Naive thymus-derived CD4-positive, alpha-beta T cell (primary cell): ENCODE measurements at regions of chr18 and their contacts with region 1.

Region 1: GRCh38 chr18:21955757-21956652 is 213.4 kb upstream of the GATA6 start:
- DNase-seq: peak; percentile 32 to 77 (median 59)
- ATAC-seq: peak; percentile 92
- H3K4me3 ChIP-seq: no peak overlapping the region
- H3K4me3 Mint-ChIP-seq: no peak overlapping the region
- H3K27ac ChIP-seq: no peak overlapping the region
- H3K27ac Mint-ChIP-seq: no peak overlapping the region
- H3K4me1 ChIP-seq: no peaks in the 10 kb centered on the region
- H3K4me1 Mint-ChIP-seq: peaks cover 0 to 2% (median 0%) of the 10 kb centered on the region in 7 donors
- H3K27me3 ChIP-seq: no peaks in the 10 kb centered on the region
- H3K27me3 Mint-ChIP-seq: peaks cover 8 to 30% (median 11%) of the 10 kb centered on the region in 5 donors

Region 2: DNA sequence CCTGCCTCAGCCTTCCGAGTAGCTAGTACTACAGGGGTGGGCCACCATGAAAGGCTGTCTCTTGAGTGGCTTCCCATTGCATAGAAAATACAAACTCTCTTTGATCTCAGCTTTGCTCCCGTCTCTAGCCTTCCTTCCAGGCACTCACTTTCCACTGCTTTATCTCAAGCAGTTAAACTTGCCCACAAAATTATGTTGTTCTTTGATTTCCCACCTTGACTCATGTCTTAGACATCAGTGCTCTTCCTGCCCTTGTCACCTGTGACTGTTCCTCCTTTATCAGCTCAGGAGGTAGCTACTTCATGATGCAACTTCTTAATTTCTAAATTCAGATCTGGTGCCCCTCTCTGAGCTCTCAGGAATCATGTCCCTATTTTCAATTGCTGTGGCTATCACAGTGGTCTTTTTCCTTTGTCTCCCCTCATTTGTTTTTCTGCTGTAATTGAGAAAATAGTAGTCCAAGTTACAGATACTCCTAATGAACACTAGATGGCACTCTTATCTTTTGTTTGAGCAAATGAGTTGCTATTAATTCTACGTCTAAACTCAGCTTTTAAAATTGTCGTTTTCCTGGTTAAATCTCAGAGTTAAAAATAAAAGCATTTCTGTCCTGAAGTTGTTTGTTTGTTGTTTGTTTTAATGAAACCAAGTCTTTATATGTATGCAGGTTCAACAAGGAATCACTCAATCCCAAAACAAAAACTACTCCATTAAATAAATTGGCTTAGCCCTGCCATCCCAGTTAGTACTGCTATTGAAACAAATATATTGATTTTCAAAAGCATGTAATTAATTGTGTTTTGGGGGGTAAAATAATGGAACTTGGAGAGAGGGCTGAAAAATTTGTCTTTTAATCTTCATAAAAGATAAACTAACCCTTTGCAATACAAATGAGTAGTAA is 760.9 kb before region 1 on chr18:
- CTCF ChIA-PET with region 1: interaction called, 8 read pairs
- POLR2A ChIA-PET with region 1: no interaction called
- intact Hi-C with region 1: loop called in 1 of 2 experiments (anchors 1 kb)
- DNase-seq: peak in 6 of 9 donors; percentile 3 to 26 (median 18)
- ATAC-seq: peak; percentile 41
- H3K4me3 ChIP-seq: no peak overlapping the region
- H3K4me3 Mint-ChIP-seq: no peak overlapping the region
- H3K27ac ChIP-seq: no peak overlapping the region
- H3K27ac Mint-ChIP-seq: peak overlapping the region in 1 of 9 donors; percentile 0
- H3K4me1 ChIP-seq: no peaks in the 10 kb centered on the region
- H3K4me1 Mint-ChIP-seq: peaks cover 0 to 2% (median 0%) of the 10 kb centered on the region in 7 donors
- H3K27me3 ChIP-seq: no peaks in the 10 kb centered on the region
- H3K27me3 Mint-ChIP-seq: peaks cover 13 to 30% (median 20%) of the 10 kb centered on the region in 5 donors

Region 3: GRCh38 chr18:21489119-21489750 is 466.8 kb before region 1 on chr18:
- CTCF ChIA-PET with region 1: no interaction called
- POLR2A ChIA-PET with region 1: no interaction called
- intact Hi-C with region 1: loop called in 1 of 2 experiments (anchors 1 kb)
- DNase-seq: peak in 5 of 9 donors; percentile 6 to 33 (median 22)
- ATAC-seq: peak; percentile 38
- H3K4me3 ChIP-seq: no peak overlapping the region
- H3K4me3 Mint-ChIP-seq: no peak overlapping the region
- H3K27ac ChIP-seq: no peak overlapping the region
- H3K27ac Mint-ChIP-seq: no peak overlapping the region
- H3K4me1 ChIP-seq: no peaks in the 10 kb centered on the region
- H3K4me1 Mint-ChIP-seq: peaks cover 0 to 1% (median 0%) of the 10 kb centered on the region in 7 donors
- H3K27me3 ChIP-seq: no peaks in the 10 kb centered on the region
- H3K27me3 Mint-ChIP-seq: peaks cover 0 to 4% (median 0%) of the 10 kb centered on the region in 5 donors

Region 4: GRCh38 chr18:21727702-21728101 is 228.3 kb before region 1 on chr18:
- CTCF ChIA-PET with region 1: no interaction called
- POLR2A ChIA-PET with region 1: no interaction called
- intact Hi-C with region 1: loop called in 1 of 2 experiments (anchors 10 kb)
- DNase-seq: no peak
- ATAC-seq: no peak
- H3K4me3 ChIP-seq: no peak overlapping the region
- H3K4me3 Mint-ChIP-seq: no peak overlapping the region
- H3K27ac ChIP-seq: no peak overlapping the region
- H3K27ac Mint-ChIP-seq: no peak overlapping the region
- H3K4me1 ChIP-seq: no peaks in the 10 kb centered on the region
- H3K4me1 Mint-ChIP-seq: peaks cover 0 to 4% (median 0%) of the 10 kb centered on the region in 7 donors
- H3K27me3 ChIP-seq: no peaks in the 10 kb centered on the region
- H3K27me3 Mint-ChIP-seq: peaks cover 0 to 6% (median 0%) of the 10 kb centered on the region in 5 donors

Region 5: GRCh38 chr18:21820035-21820810 is 135.8 kb before region 1 on chr18:
- CTCF ChIA-PET with region 1: no interaction called
- POLR2A ChIA-PET with region 1: no interaction called
- intact Hi-C with region 1: loop called in 1 of 2 experiments (anchors 1 kb)
- DNase-seq: no peak
- ATAC-seq: no peak
- H3K4me3 ChIP-seq: no peak overlapping the region
- H3K4me3 Mint-ChIP-seq: no peak overlapping the region
- H3K27ac ChIP-seq: no peak overlapping the region
- H3K27ac Mint-ChIP-seq: no peak overlapping the region
- H3K4me1 ChIP-seq: no peaks in the 10 kb centered on the region
- H3K4me1 Mint-ChIP-seq: no peaks in the 10 kb centered on the region
- H3K27me3 ChIP-seq: no peaks in the 10 kb centered on the region
- H3K27me3 Mint-ChIP-seq: no peaks in the 10 kb centered on the region

Region 6: DNA sequence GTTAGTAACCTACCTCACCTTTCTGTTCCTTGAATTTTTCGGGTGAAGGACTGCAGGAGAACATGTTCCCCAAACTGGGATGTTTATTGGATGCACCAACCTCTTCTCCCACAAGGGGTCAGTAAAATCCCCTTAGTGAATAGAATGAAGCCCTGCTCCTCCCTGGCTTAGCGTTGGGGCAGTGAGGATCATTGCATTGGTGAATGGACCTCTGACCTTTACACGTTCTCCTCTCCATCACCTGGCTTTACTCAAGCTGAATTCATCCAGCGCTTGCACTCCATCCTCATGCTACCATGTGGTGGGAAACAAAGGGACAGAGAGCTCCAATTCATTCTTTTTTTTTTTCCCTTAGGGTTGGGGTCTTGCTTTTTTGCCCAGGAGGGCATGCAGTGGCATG is 58.2 kb before region 1 on chr18:
- CTCF ChIA-PET with region 1: no interaction called
- POLR2A ChIA-PET with region 1: no interaction called
- intact Hi-C with region 1: loop called in 1 of 2 experiments (anchors 1 kb)
- DNase-seq: peak in 1 of 9 donors; percentile 3
- ATAC-seq: no peak
- H3K4me3 ChIP-seq: no peak overlapping the region
- H3K4me3 Mint-ChIP-seq: no peak overlapping the region
- H3K27ac ChIP-seq: no peak overlapping the region
- H3K27ac Mint-ChIP-seq: no peak overlapping the region
- H3K4me1 ChIP-seq: no peaks in the 10 kb centered on the region
- H3K4me1 Mint-ChIP-seq: peaks cover 0 to 7% (median 3%) of the 10 kb centered on the region in 7 donors
- H3K27me3 ChIP-seq: no peaks in the 10 kb centered on the region
- H3K27me3 Mint-ChIP-seq: peaks cover 10 to 27% (median 17%) of the 10 kb centered on the region in 5 donors

Region 7: DNA sequence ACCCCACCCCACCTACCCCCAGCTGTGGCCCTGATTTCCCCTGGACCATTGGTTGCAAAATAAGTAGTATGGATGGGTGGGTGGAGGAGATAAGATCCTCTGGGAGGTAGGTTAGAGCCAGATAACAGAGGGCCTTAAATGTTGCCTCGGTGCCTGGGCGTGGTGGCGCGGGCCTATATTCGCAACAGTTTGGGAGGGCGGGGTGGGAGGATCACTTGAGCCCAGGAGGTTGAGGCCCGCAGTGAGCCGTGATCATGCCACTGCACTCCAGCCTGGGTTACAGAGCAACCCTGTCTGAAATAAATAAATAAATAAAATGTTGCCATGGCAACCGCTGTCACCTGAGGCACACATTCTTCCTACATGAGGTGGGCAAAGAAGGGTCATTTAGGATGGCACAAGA is 110.1 kb after region 1 on chr18:
- CTCF ChIA-PET with region 1: no interaction called
- POLR2A ChIA-PET with region 1: no interaction called
- intact Hi-C with region 1: no loop called
- DNase-seq: no peak
- ATAC-seq: no peak
- H3K4me3 ChIP-seq: no peak overlapping the region
- H3K4me3 Mint-ChIP-seq: no peak overlapping the region
- H3K27ac ChIP-seq: no peak overlapping the region
- H3K27ac Mint-ChIP-seq: no peak overlapping the region
- H3K4me1 ChIP-seq: no peaks in the 10 kb centered on the region
- H3K4me1 Mint-ChIP-seq: peaks cover 0 to 2% (median 0%) of the 10 kb centered on the region in 7 donors
- H3K27me3 ChIP-seq: no peaks in the 10 kb centered on the region
- H3K27me3 Mint-ChIP-seq: peaks cover 0 to 13% (median 11%) of the 10 kb centered on the region in 5 donors

Region 8: GRCh38 chr18:22141211-22141610 is 185.2 kb after region 1 on chr18:
- CTCF ChIA-PET with region 1: no interaction called
- POLR2A ChIA-PET with region 1: no interaction called
- intact Hi-C with region 1: no loop called
- DNase-seq: no peak
- ATAC-seq: no peak
- H3K4me3 ChIP-seq: no peak overlapping the region
- H3K4me3 Mint-ChIP-seq: no peak overlapping the region
- H3K27ac ChIP-seq: no peak overlapping the region
- H3K27ac Mint-ChIP-seq: no peak overlapping the region
- H3K4me1 ChIP-seq: no peaks in the 10 kb centered on the region
- H3K4me1 Mint-ChIP-seq: no peaks in the 10 kb centered on the region
- H3K27me3 ChIP-seq: peaks cover 0 to 4% of the 10 kb centered on the region in 2 donors
- H3K27me3 Mint-ChIP-seq: peaks cover 0 to 8% (median 5%) of the 10 kb centered on the region in 5 donors